AG04450 (cell line): ENCODE measurements at regions of chr4 and their contacts with region 1.

Region 1: DNA sequence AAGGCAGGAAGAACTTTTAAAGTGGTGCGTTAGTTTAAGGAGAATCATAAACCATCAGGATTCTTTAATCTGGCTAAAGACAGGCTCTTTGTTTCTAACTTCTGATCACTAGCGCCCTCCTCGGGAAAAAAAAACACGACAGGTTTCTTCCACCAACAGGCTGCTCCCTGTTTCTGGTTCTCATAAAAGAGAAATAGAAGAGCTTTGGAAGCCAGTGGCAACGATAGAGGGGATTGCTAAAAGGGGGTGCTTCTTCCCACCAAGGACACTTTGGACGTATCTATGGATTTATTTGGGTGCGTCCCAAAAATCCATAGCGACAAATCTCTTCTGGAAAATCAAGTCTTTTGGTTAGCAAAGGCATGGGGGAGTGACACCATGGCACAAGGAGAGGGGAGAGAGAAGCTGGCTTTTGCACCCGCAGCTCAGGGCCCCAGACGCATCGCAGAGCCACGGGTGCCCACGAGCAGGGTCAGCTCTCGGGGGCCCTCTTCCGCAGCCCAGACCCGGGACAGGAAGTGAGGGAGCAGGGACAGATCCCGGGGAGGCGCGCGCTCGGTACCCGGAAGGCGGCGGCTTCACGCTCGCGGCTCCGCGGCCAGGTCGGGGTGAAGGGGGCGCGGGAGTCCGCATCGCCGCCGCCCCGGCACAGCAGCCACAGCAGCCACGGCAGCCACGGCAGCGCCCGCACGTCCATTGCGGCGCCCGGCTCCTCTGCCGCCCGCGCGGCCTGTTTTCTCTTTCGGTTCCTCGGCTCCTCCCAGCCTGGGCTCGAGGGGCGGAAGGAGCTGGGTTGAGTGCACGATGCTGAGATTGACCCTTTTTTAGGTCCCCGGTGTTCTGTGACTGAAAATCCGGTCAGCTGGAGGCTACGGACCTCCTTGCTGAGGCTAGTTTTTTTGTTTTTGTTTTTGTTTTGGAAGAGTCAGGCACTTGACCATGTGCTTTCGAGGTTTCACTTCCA is at the start of gene CTSO:
- DNase-seq: peak; percentile 64
- H3K4me3 ChIP-seq: peak within 1 kb of the TSS; percentile 74
- H3K27ac ChIP-seq: peak within 1 kb of the TSS; percentile 95
- H3K27me3 ChIP-seq: no peaks in the 10 kb centered on the region
- CTCF ChIP-seq: peak; percentile 69
- polyA plus RNA-seq, gene CTSO: 19.0 and 24.0 TPM in 2 replicates

Region 2: GRCh38 chr4:155506745-155507144 is 446.7 kb before region 1 on chr4:
- CTCF ChIA-PET with region 1: interaction called, 10 read pairs
- POLR2A ChIA-PET with region 1: no interaction called
- DNase-seq: no peak
- H3K4me3 ChIP-seq: no peak overlapping the region
- H3K27ac ChIP-seq: no peak overlapping the region
- H3K27me3 ChIP-seq: no peaks in the 10 kb centered on the region
- CTCF ChIP-seq: no peak

Region 3: DNA sequence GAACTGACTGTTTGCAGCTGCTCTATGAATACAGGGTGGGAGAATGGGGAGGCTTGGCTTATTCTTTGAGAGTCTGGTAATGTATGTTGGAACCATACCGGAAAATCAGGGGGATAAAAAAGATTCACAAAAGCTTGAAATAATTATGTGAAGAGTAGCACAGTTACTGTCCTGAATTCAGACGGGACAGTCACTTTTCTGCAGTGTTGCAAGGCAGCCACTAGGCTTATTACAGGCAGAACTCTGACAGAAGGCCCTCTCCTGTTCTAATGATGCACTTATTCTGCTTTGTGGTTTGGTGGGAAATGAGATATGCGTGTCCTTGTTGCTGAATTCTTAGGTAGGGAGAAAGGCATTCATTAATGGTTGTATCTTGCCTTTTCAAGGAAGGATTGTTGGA is 157.4 kb before region 1 on chr4:
- CTCF ChIA-PET with region 1: interaction called, 17 read pairs
- POLR2A ChIA-PET with region 1: no interaction called
- DNase-seq: no peak
- H3K4me3 ChIP-seq: no peak overlapping the region
- H3K27ac ChIP-seq: no peak overlapping the region
- H3K27me3 ChIP-seq: no peaks in the 10 kb centered on the region
- CTCF ChIP-seq: peak; percentile 43

Region 4: GRCh38 chr4:155822572-155822971 is 130.9 kb before region 1 on chr4:
- CTCF ChIA-PET with region 1: interaction called, 10 read pairs
- POLR2A ChIA-PET with region 1: no interaction called
- DNase-seq: no peak
- H3K4me3 ChIP-seq: no peak overlapping the region
- H3K27ac ChIP-seq: no peak overlapping the region
- H3K27me3 ChIP-seq: no peaks in the 10 kb centered on the region
- CTCF ChIP-seq: no peak

Region 5: DNA sequence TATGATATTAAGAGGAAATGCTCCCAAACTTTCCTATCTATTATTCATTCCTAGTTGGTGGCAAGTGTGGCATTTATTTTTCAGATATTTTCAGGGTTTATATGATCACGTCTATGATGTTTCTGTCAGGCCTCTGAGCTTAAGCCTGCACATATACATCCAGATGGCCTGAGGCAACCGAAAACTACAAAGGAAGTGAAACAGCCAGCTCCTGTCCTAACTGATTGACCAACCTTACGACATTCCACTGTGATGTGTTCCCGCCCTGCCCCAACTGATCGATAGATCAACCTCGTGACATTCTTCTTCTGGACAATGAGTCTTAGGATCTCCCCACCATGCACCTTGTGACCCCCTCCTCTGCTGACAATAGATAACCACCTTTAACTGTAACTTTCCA is 67.9 kb after region 1 on chr4:
- CTCF ChIA-PET with region 1: no interaction called
- POLR2A ChIA-PET with region 1: no interaction called
- DNase-seq: no peak
- H3K4me3 ChIP-seq: no peak overlapping the region
- H3K27ac ChIP-seq: no peak overlapping the region
- H3K27me3 ChIP-seq: no peaks in the 10 kb centered on the region
- CTCF ChIP-seq: no peak

Region 6: GRCh38 chr4:156109949-156110900 is 156.8 kb after region 1 on chr4:
- CTCF ChIA-PET with region 1: no interaction called
- POLR2A ChIA-PET with region 1: no interaction called
- DNase-seq: no peak
- H3K4me3 ChIP-seq: no peak overlapping the region
- H3K27ac ChIP-seq: no peak overlapping the region
- H3K27me3 ChIP-seq: no peaks in the 10 kb centered on the region
- CTCF ChIP-seq: peak; percentile 19; the same call in 1 of the 2 replicates